ENCODE measurements at regions of chrX and their contacts with region 1.

Region 1: GRCh38 chrX:45515262-45516215 is 314.9 kb upstream of the DIPK2B start:
- DNase-seq: peak; percentile 38
- ATAC-seq: peak; percentile 72
- H3K4me3 Mint-ChIP-seq: no peak overlapping the region
- H3K27ac Mint-ChIP-seq: no peak overlapping the region
- H3K4me1 Mint-ChIP-seq: peaks cover 8% of the 10 kb centered on the region
- H3K27me3 Mint-ChIP-seq: no peaks in the 10 kb centered on the region
- CTCF ChIP-seq: peak; percentile 38

Region 2: GRCh38 chrX:45743081-45743533 is 227.6 kb after region 1 on chrX:
- CTCF ChIA-PET with region 1: interaction called, 3 read pairs
- POLR2A ChIA-PET with region 1: no interaction called
- intact Hi-C with region 1: loop called (anchors 10 kb)
- DNase-seq: peak; percentile 20
- ATAC-seq: peak; percentile 60
- H3K4me3 Mint-ChIP-seq: no peak overlapping the region
- H3K27ac Mint-ChIP-seq: no peak overlapping the region
- H3K4me1 Mint-ChIP-seq: peaks cover 14% of the 10 kb centered on the region
- H3K27me3 Mint-ChIP-seq: no peaks in the 10 kb centered on the region
- CTCF ChIP-seq: no peak